Activated CD4-positive, alpha-beta memory T cell treated with anti-CD3 and anti-CD28 coated beads for 36 hours (primary cell): ENCODE measurements at regions of chr16 and their contacts with region 1.

Region 1: GRCh38 chr16:69105489-69106361 is at the start of gene HAS3:
- DNase-seq: peak; percentile 47
- H3K4me3 Mint-ChIP-seq: peak within 1 kb of the TSS; percentile 74
- H3K27ac Mint-ChIP-seq: no peak within 1 kb of the TSS
- H3K4me1 Mint-ChIP-seq: peaks cover 16% of the 10 kb centered on the region
- H3K27me3 Mint-ChIP-seq: peaks cover 31% of the 10 kb centered on the region
- total RNA-seq, gene HAS3: 0.10 to 0.21 TPM

Region 2: GRCh38 chr16:68848786-68849185 is 256.9 kb before region 1 on chr16:
- CTCF ChIA-PET with region 1: interaction called, 6 read pairs
- POLR2A ChIA-PET with region 1: no interaction called
- intact Hi-C with region 1: loop called (anchors 5 kb)
- DNase-seq: no peak
- H3K4me3 Mint-ChIP-seq: no peak overlapping the region
- H3K27ac Mint-ChIP-seq: no peak overlapping the region
- H3K4me1 Mint-ChIP-seq: peaks cover 29% of the 10 kb centered on the region
- H3K27me3 Mint-ChIP-seq: no peaks in the 10 kb centered on the region

Region 3: GRCh38 chr16:68902008-68902968 is 203.4 kb before region 1 on chr16:
- CTCF ChIA-PET with region 1: no interaction called
- POLR2A ChIA-PET with region 1: no interaction called
- intact Hi-C with region 1: loop called (anchors 10 kb)
- DNase-seq: peak; percentile 11
- H3K4me3 Mint-ChIP-seq: no peak overlapping the region
- H3K27ac Mint-ChIP-seq: no peak overlapping the region
- H3K4me1 Mint-ChIP-seq: no peaks in the 10 kb centered on the region
- H3K27me3 Mint-ChIP-seq: no peaks in the 10 kb centered on the region